BJ (cell line): ENCODE measurements at regions of chr21 and their contacts with region 1.

Region 1: DNA sequence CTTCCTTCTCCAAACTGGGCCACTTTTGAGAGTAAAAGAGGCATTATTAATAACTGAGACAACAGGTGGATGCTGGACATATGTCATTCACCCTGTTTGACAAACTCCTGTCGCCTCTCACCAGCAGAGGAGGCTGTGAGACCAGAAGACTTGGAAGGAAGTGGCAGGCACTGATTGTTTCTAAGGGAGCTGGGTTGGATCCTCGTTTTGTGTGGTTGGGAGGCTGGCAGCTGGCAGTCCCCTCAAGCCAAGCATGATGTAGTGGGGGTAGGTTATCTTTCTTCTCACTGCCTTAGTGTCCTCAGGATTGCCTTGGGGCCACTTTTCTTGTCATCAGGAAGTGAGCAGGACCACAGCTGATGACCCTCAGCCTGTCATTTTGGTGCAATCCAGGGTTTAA is 86.5 kb upstream of the KCNJ15 start:
- DNase-seq: no peak
- H3K4me3 ChIP-seq: no peak overlapping the region
- H3K27me3 ChIP-seq: no peaks in the 10 kb centered on the region
- CTCF ChIP-seq: 0 out of 2 replicates have a peak, but pooled peaks have one; percentile 26

Region 2: DNA sequence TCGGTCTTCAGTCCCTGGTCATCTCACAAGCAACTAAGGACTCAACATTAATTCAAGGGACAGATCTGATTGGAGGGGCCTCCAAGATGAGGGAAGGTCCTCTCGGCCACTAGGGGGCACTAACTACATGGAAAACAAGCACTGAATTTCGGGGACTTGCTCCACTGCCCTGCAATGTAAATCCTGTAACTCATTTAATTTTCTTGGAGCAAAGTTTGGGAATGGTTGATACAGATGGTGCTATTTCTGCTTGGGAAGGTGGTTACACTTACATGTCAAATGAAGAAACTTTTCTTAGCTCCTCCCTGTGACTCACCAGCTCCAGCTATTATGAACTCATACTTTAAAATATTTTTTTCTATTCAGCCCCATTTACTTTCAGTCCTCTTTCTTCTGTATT is 10.9 kb before region 1 on chr21:
- CTCF ChIA-PET with region 1: interaction called, 47 read pairs
- POLR2A ChIA-PET with region 1: no interaction called
- DNase-seq: peak; percentile 61
- H3K4me3 ChIP-seq: no peak overlapping the region
- H3K27me3 ChIP-seq: no peaks in the 10 kb centered on the region; the same call in 1 of the 2 replicates
- CTCF ChIP-seq: peak; percentile 77

Region 3: DNA sequence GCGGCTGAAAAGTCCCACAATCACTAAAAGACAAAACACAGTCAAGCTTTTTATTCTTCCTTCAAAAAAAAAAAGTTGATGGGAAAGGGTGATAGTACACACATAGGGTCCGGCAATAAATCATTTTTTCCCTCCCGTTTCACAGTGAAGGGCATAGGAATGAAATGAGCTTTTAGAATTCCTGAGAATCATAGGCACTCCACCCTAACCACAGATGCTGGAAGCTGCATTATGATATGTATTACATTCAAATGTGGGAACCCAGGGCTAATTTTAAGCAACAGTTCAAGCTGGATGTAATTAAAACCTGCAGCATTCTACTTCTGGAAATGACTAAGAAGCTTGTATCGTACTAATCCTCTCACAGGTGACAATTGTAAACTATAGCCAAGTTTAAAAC is 10.8 kb after region 1 on chr21:
- CTCF ChIA-PET with region 1: interaction called, 13 read pairs
- POLR2A ChIA-PET with region 1: no interaction called
- DNase-seq: peak; percentile 58
- H3K4me3 ChIP-seq: no peak overlapping the region
- H3K27me3 ChIP-seq: no peaks in the 10 kb centered on the region
- CTCF ChIP-seq: no peak

Region 4: DNA sequence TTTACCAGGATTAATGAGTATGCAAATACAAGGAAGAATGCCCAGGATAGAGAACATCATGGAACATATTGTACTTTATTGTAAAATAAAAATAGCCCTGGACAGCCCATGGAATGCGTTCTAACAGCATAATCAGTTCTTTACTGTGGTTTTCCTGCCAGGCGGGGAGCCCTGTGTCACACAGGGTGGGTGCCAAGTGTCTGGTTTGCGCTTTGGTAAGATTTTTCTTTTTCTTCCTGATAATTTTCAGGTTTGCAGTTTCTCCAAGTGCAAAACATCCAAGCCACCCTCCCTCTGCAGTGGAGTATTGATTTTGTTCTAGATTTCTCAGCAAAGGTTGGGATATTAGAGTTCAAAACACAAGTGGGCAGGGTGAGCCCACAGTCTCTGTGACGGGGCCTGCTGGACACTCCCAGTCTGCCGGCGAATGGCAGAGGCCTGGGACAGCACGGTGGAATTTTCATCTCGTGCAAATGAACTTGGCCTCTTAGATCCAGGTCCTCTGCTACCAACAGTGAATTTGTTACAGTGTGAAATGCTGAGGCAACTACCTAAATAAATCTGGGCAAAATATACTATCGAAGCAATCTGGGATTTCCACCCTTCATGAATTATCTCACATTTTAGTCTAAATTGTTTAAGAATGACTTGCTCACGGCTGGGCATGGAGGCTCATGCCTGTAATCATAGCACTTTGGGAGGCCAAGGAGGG is 70.9 kb after region 1 on chr21:
- CTCF ChIA-PET with region 1: no interaction called
- POLR2A ChIA-PET with region 1: no interaction called
- DNase-seq: peak; percentile 31
- H3K4me3 ChIP-seq: no peak overlapping the region
- H3K27me3 ChIP-seq: no peaks in the 10 kb centered on the region
- CTCF ChIP-seq: no peak

Region 5: DNA sequence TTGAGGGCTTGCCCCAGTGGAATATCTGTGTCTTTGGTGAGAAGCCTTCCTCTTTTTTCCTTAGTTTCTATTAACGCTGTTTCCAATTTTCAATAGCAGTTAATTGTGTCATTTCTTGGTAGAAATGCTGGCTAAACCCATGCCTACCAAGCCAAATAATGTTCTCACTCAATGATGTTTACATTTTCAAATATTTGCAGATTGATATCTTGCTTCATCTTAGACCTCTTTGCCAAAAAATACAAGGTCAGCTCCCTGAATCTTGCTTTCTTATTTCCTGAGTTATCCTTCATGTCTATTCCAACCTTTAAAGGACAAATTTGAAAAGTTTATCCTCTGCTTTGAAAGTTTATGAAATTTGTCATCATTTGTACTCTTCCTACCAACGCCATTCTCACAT is 91.6 kb after region 1 on chr21:
- CTCF ChIA-PET with region 1: no interaction called
- POLR2A ChIA-PET with region 1: interaction called, 10 read pairs
- DNase-seq: no peak
- H3K4me3 ChIP-seq: no peak overlapping the region
- H3K27me3 ChIP-seq: no peaks in the 10 kb centered on the region; the same call in 1 of the 2 replicates
- CTCF ChIP-seq: no peak